Activated T-helper 2 cell treated with anti-CD3 and anti-CD28 coated beads, Interferon-gamma antibody, Interleukin-2, Interleukin-4, amounts not matched to agents 10 μg/mL and 5 μg/mL and 100 μg/mL, durations not matched to agents 14 hours and 24 hours and 36 hours (primary cell): ENCODE measurements at regions of chr7 and their contacts with region 1.

Region 1: GRCh38 chr7:106870983-106871410 is 5.9 kb downstream of the PIK3CG start:
- DNase-seq: no peak
- H3K4me3 Mint-ChIP-seq: peak overlapping the region; percentile 37
- H3K27ac Mint-ChIP-seq: peak overlapping the region; percentile 64
- H3K4me1 Mint-ChIP-seq: peaks cover 63% of the 10 kb centered on the region
- H3K27me3 Mint-ChIP-seq: no peaks in the 10 kb centered on the region

Region 2: DNA sequence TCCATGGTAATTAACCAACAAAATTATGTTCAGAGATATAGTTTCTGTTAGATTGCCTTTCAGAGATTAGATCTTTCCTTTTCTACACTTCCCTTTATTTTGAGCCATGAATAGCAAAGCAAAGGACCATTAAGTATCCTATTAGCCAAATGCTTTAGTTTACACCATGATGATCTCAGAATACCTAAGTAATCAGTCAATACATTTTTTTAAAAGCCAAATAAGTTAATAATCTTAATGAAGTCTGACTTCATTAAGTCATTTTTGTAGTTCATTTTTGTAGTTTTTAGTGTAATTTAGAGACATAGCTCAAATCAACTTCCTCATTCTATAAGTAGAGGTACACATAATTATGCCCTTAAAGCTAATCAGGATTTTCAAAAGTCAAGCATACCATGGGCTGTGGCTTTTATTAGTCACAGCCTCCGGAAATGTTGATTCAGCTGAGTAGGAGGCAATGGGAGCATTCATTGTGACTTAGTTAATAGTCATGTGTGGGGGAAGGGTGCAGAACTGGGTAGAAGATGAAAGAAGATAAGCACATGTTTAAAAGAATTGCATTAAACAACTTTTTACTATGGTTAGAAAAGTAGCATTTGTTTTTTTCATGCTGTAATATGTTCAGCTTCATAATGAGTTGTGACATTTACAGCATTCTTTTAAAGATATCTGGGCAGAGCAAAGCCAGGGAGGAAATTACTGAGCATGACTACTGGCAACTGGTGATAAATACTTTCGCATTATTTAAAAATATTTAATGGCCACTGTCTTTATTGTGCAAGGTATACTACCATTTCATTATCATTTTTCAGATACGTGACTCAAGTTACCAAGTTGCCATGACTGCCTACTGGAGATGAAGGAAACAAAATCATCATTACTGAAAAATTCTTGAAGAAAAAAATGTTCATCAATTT is 152.8 kb before region 1 on chr7:
- intact Hi-C with region 1: loop called (anchors 5 kb)
- DNase-seq: peak; percentile 56
- H3K4me3 Mint-ChIP-seq: no peak overlapping the region
- H3K27ac Mint-ChIP-seq: no peak overlapping the region
- H3K4me1 Mint-ChIP-seq: peaks cover 30% of the 10 kb centered on the region
- H3K27me3 Mint-ChIP-seq: no peaks in the 10 kb centered on the region

Region 3: DNA sequence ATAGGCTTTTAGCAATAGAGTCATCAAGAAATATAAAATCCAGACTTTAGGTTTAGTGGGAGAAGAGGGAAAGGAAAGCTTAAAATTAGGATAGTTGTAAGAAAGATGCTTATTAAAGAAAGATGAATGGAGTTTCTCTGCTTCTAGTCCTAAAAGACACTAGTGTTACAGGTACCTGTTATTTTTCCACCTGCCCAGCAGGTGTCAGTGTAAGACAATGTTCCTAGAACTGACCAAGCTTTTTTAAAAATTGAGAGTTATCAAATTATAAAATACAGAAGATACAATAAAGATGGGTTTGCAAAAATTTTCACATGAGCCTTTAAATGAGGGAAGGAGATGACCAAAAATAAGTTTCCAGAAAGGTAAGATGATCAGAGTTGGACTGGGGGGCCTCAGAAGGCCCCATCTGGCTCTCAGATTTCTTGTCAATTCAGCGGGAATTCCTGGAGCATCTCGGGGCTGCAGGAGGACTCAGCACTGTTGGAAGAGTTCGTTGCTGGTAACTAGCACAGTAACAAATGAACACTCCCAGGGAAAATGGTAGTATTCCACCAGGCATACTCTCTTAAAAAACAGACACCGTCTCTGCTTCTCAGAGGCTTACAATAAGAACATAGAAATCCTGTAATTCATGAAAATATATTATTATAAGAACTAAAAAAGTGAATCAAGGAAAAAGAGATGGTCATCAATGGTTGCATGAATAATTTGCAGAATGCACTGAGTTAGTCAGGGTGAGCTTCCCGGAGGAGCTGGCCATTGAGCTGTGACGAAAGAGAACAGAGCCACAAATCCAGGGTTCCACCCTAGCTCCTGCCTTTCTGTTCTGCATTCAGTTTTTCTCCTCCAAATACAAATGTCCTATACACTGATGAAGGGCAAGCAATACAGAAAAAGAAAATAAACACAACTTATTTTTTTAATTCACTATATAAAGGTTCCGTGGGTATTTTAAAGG is 77.7 kb before region 1 on chr7:
- intact Hi-C with region 1: loop called (anchors 5 kb)
- DNase-seq: no peak
- H3K4me3 Mint-ChIP-seq: no peak overlapping the region
- H3K27ac Mint-ChIP-seq: no peak overlapping the region
- H3K4me1 Mint-ChIP-seq: no peaks in the 10 kb centered on the region
- H3K27me3 Mint-ChIP-seq: peaks cover 5% of the 10 kb centered on the region

Region 4: DNA sequence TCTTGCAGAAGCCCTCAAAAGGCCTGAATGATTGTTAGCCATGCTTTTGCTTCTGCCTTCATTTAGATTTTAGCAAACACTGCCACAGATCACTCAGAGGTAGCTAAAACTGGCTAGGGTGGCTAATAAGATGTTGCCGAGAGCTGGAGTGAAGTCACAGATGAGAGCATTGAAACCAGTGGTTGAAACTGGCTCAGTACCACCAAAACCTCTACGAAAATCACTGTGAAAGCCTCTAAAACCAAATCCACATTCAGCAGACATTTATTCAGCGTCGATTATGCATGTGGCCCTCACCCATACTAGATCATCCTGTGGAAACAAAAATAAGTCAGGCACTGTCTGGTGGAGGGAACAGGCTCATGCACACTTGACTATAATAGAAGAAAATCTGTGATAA is 44.9 kb after region 1 on chr7:
- intact Hi-C with region 1: loop called (anchors 2 kb)
- DNase-seq: no peak
- H3K4me3 Mint-ChIP-seq: no peak overlapping the region
- H3K27ac Mint-ChIP-seq: no peak overlapping the region
- H3K4me1 Mint-ChIP-seq: peaks cover 6% of the 10 kb centered on the region
- H3K27me3 Mint-ChIP-seq: peaks cover 12% of the 10 kb centered on the region